CD4-positive, alpha-beta T cell (primary cell): ENCODE measurements at regions of chr9 and their contacts with region 1.

Region 1: GRCh38 chr9:70111042-70111602 is 67.5 kb downstream of the MAMDC2 start:
- DNase-seq: peak; percentile 7 to 67 (median 30)
- ATAC-seq: no peak
- H3K4me3 ChIP-seq: no peak overlapping the region
- H3K4me3 Mint-ChIP-seq: no peak overlapping the region
- H3K27ac ChIP-seq: no peak overlapping the region
- H3K27ac Mint-ChIP-seq: no peak overlapping the region
- H3K4me1 ChIP-seq: peaks cover 3% of the 10 kb centered on the region
- H3K4me1 Mint-ChIP-seq: peaks cover 14% of the 10 kb centered on the region
- H3K27me3 ChIP-seq: peaks cover 0 to under 1% of the 10 kb centered on the region in 2 experiments
- H3K27me3 Mint-ChIP-seq: peaks cover 30% of the 10 kb centered on the region
- CTCF ChIP-seq: peak; percentile 77

Region 2: DNA sequence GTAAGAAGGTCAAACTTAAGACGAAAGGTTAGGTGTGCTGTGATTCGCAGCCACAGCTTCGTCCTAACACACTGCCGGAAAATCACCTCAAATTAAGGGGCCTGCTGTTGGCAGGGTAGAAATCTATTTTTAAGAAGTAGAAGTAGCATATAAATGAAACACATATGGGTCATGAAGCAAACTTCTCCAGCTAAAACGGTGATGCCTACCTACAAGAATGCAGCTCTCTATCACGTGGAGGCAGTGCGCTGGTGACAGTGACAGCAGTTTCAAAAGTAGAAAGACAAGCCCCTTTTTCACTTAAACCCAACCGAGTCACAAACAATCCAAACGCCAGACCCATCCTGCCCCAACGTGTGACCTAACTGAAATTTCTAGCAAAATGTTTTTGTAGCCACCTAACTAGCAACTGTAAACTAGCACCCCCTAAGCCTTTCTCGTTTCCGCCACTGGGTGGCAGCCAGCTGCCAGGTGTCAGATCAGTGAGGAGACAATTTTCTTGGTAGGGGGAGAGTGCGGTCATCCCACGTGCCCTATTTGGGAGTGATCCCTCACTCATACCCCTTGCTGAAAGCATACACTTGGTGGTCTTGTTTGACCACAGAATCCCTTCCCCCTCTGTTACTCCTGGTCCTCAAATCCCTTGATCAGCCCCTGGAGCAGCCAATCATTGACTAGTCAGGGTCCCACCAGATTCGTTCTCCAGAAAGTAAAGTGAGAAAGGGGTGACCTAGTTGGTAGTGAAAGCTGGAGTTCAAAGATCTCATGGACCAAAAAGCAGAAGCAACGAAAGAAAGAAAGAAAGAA is 139.3 kb before region 1 on chr9:
- CTCF ChIA-PET with region 1: no interaction called
- POLR2A ChIA-PET with region 1: no interaction called
- intact Hi-C with region 1: loop called in 1 of 2 experiments (anchors 2 kb)
- DNase-seq: peak; percentile 1 to 59 (median 22)
- ATAC-seq: no peak
- H3K4me3 ChIP-seq: no peak overlapping the region
- H3K4me3 Mint-ChIP-seq: no peak overlapping the region
- H3K27ac ChIP-seq: no peak overlapping the region
- H3K27ac Mint-ChIP-seq: no peak overlapping the region
- H3K4me1 ChIP-seq: no peaks in the 10 kb centered on the region
- H3K4me1 Mint-ChIP-seq: no peaks in the 10 kb centered on the region
- H3K27me3 ChIP-seq: no peaks in the 10 kb centered on the region
- H3K27me3 Mint-ChIP-seq: peaks cover 12% of the 10 kb centered on the region
- CTCF ChIP-seq: peak; percentile 55